ENCODE measurements at regions of chr13 and their contacts with region 1.

Region 1: DNA sequence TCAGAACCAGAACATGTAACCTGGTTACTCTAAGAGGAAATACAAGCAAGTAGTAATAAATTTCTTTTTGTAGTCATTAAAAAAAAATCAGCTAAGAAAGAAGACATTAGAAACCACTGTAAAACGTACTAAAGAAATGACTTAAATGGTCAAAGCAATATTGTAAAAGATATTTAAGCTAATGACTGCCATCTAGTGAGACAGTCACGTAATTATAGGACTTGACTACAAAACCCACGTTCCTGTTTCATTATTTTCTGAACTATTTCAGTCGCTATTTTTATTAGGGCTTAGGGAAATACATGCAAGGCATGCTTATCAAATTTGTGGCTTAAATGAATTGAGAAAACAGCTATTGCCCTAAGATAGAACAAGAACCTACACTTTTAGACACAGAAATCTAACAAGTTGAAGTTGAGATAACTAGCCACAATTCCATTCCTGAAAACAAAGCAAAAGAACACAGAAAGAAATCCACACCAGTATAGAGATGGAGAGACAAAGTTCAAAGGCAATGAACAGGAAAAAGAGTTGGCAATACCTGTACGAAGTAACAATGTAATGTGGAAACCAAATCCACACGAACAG is 17.9 kb downstream of the ALG5 start:
- DNase-seq: peak in 1 of 2 experiments; percentile 45
- ATAC-seq: peak in 1 of 2 experiments; percentile 47; a peak in 2 of 6 replicates
- H3K4me3 ChIP-seq: no peak overlapping the region
- H3K27ac ChIP-seq: no peak overlapping the region
- H3K4me1 ChIP-seq: no peaks in the 10 kb centered on the region
- CTCF ChIP-seq: peak; percentile 51
- EP300 ChIP-seq: no peak
- POLR2A ChIP-seq: no peak
- RAD21 ChIP-seq: peak; percentile 51 to 53

Region 2: GRCh38 chr13:36858290-36858689 is 123.0 kb before region 1 on chr13:
- CTCF ChIA-PET with region 1: interaction called, 62 read pairs
- POLR2A ChIA-PET with region 1: no interaction called
- DNase-seq: peak; percentile 7 to 53
- ATAC-seq: peak; percentile 89 to 91
- H3K4me3 ChIP-seq: no peak overlapping the region
- H3K27ac ChIP-seq: no peak overlapping the region
- H3K4me1 ChIP-seq: no peaks in the 10 kb centered on the region
- CTCF ChIP-seq: peak; percentile 48
- EP300 ChIP-seq: no peak
- POLR2A ChIP-seq: no peak
- RAD21 ChIP-seq: peak; percentile 34 to 35; a peak in 4 of 5 replicates

Region 3: GRCh38 chr13:36992340-36992739 is 11.1 kb after region 1 on chr13:
- CTCF ChIA-PET with region 1: interaction called, 23 read pairs
- POLR2A ChIA-PET with region 1: no interaction called
- DNase-seq: no peak
- ATAC-seq: no peak
- H3K4me3 ChIP-seq: no peak overlapping the region
- H3K27ac ChIP-seq: no peak overlapping the region
- H3K4me1 ChIP-seq: no peaks in the 10 kb centered on the region
- CTCF ChIP-seq: no peak
- EP300 ChIP-seq: no peak
- POLR2A ChIP-seq: no peak
- RAD21 ChIP-seq: no peak

Region 4: GRCh38 chr13:37277435-37278144 is 296.3 kb after region 1 on chr13:
- CTCF ChIA-PET with region 1: no interaction called
- POLR2A ChIA-PET with region 1: no interaction called
- DNase-seq: no peak
- ATAC-seq: no peak
- H3K4me3 ChIP-seq: no peak overlapping the region
- H3K27ac ChIP-seq: no peak overlapping the region
- H3K4me1 ChIP-seq: no peaks in the 10 kb centered on the region
- CTCF ChIP-seq: no peak
- EP300 ChIP-seq: no peak
- POLR2A ChIP-seq: no peak
- RAD21 ChIP-seq: no peak

Measured in A549 (cell line).